CD4-positive, alpha-beta T cell (primary cell): ENCODE measurements at regions of chr9 and their contacts with region 1.

Region 1: DNA sequence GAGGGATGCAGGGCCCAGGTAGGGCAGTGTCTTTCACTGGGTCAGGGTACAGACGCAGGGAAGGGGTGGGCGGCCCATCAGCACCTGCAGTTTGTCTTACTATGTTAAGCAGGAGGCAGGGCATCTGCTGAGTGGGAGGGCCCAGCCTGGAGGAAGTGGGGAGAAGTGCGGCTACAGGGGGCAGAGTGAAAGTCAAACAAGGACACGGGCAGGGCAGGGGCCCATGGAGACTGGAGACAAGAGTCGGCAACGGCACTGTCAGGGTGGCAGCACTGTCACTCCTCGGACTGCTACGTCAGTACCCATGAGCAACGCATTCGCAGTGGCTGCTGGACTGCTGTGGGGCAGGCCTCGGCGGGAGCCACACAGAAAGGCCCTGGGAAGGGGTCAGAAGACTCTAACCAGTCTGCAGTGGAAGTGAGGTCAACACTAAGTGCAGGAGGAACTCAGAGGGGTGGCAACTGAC is 19.7 kb downstream of the CAMSAP1 start:
- DNase-seq: peak; percentile 39 to 82 (median 60)
- ATAC-seq: peak; percentile 95
- H3K4me3 ChIP-seq: peak overlapping the region; percentile 38
- H3K4me3 Mint-ChIP-seq: peak overlapping the region; percentile 78
- H3K27ac ChIP-seq: peak overlapping the region; percentile 34 to 72
- H3K27ac Mint-ChIP-seq: peak overlapping the region; percentile 89
- H3K4me1 ChIP-seq: peaks cover 65% of the 10 kb centered on the region
- H3K4me1 Mint-ChIP-seq: peaks cover 80% of the 10 kb centered on the region
- H3K27me3 ChIP-seq: no peaks in the 10 kb centered on the region
- H3K27me3 Mint-ChIP-seq: no peaks in the 10 kb centered on the region
- CTCF ChIP-seq: no peak

Region 2: GRCh38 chr9:135864447-135865049 is 23.1 kb before region 1 on chr9:
- CTCF ChIA-PET with region 1: no interaction called
- POLR2A ChIA-PET with region 1: no interaction called
- intact Hi-C with region 1: loop called in 1 of 2 experiments (anchors 1 kb)
- DNase-seq: peak; percentile 59 to 82 (median 70)
- ATAC-seq: peak; percentile 74
- H3K4me3 ChIP-seq: no peak overlapping the region
- H3K4me3 Mint-ChIP-seq: no peak overlapping the region
- H3K27ac ChIP-seq: no peak overlapping the region
- H3K27ac Mint-ChIP-seq: no peak overlapping the region
- H3K4me1 ChIP-seq: peaks cover 7% of the 10 kb centered on the region
- H3K4me1 Mint-ChIP-seq: peaks cover 13% of the 10 kb centered on the region
- H3K27me3 ChIP-seq: no peaks in the 10 kb centered on the region
- H3K27me3 Mint-ChIP-seq: no peaks in the 10 kb centered on the region
- CTCF ChIP-seq: peak; percentile 83